SK-N-SH (cell line): ENCODE measurements at regions of chr6 and their contacts with region 1.

Region 1: GRCh38 chr6:157756708-157757429 is 66.2 kb upstream of the SNX9 start:
- DNase-seq: peak; percentile 79
- H3K4me3 ChIP-seq: peak overlapping the region in 1 of 2 experiments; percentile 29; a peak in 1 of 4 replicates
- H3K27ac ChIP-seq: peak overlapping the region in 1 of 2 experiments; percentile 45; a peak in 1 of 4 replicates
- H3K4me1 ChIP-seq: peaks cover 15 to 18% of the 10 kb centered on the region in 2 experiments; a peak in 3 of 4 replicates
- H3K27me3 ChIP-seq: no peaks in the 10 kb centered on the region
- CTCF ChIP-seq: peak; percentile 76
- EP300 ChIP-seq: no peak
- RAD21 ChIP-seq: peak; percentile 84

Region 2: DNA sequence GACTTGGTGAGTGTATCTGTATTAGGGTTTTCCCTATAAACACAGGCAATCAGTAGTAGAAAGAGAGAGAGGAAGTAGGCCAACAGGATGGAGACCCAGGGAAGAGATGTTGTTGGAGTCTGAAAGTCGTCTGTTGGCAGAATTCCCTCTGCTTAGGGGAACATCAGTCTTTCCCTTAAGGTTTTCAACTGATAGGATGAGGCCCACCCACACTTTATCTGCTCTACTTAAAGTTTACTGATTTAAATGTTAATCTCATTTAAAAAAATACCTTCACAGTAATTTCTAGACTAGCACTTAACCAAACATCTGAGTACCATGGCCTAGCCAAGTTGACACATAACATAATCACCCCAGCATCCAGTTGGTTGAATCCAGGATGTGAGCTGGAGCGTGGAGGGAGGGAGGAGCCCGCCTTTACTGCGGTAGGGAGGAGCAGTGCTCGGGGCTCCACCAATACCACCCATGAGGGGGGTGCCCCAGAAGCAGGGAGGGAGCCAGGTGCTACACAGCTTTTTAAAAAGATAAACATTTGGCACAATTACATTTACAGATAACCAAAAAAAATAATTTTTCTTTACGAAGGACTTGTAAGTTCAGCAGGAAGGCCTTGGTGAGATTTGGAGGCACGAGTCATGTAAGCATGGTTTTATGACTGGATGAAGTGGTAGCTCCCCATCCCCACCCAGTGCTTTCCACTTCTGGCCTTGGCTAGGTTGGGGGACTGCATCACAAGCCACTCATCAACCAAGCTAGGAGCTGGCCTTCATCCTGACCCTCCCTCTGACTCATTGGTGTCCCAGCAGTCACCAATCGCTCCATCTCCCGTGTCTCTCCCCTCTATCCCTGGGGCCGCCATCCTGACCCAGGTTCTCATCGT is 47.8 kb after region 1 on chr6:
- CTCF ChIA-PET with region 1: interaction called, 13 read pairs
- POLR2A ChIA-PET with region 1: no interaction called
- DNase-seq: no peak
- H3K4me3 ChIP-seq: no peak overlapping the region
- H3K27ac ChIP-seq: no peak overlapping the region
- H3K4me1 ChIP-seq: no peaks in the 10 kb centered on the region
- H3K27me3 ChIP-seq: no peaks in the 10 kb centered on the region
- CTCF ChIP-seq: no peak
- EP300 ChIP-seq: no peak
- RAD21 ChIP-seq: no peak

Region 3: GRCh38 chr6:157885211-157885788 is 128.4 kb after region 1 on chr6:
- CTCF ChIA-PET with region 1: interaction called, 11 read pairs
- POLR2A ChIA-PET with region 1: no interaction called
- DNase-seq: no peak
- H3K4me3 ChIP-seq: no peak overlapping the region
- H3K27ac ChIP-seq: no peak overlapping the region
- H3K4me1 ChIP-seq: no peaks in the 10 kb centered on the region
- H3K27me3 ChIP-seq: no peaks in the 10 kb centered on the region
- CTCF ChIP-seq: no peak
- EP300 ChIP-seq: no peak
- RAD21 ChIP-seq: no peak

Region 4: GRCh38 chr6:158060455-158061360 is 303.8 kb after region 1 on chr6:
- CTCF ChIA-PET with region 1: interaction called, 14 read pairs
- POLR2A ChIA-PET with region 1: no interaction called
- DNase-seq: peak; percentile 60
- H3K4me3 ChIP-seq: no peak overlapping the region
- H3K27ac ChIP-seq: peak overlapping the region; percentile 51 to 99
- H3K4me1 ChIP-seq: peaks cover 14 to 39% of the 10 kb centered on the region in 2 experiments; a peak in 3 of 4 replicates
- H3K27me3 ChIP-seq: no peaks in the 10 kb centered on the region
- CTCF ChIP-seq: no peak
- EP300 ChIP-seq: peak in 1 of 2 experiments; percentile 70; a peak in 1 of 4 replicates
- RAD21 ChIP-seq: no peak

Region 5: DNA sequence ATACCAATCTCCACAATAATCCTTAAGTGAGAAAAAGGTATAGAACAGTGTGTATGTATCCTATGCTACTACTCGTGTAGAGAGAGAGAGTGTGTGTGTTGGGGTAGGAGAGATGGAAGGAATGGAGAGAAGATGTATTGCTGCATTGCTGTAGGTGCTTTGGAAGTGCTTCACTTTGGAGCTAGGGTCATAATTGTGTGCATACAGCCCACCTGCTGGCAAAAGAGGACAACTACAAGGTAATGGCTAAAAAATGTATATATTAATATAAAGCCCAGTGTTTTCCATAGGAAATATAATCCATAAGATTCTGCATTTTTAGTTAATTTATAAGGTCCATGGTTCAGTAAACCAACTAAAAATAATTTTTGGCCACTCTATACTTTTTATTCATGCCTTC is 375.1 kb after region 1 on chr6:
- CTCF ChIA-PET with region 1: interaction called, 26 read pairs
- POLR2A ChIA-PET with region 1: no interaction called
- DNase-seq: peak; percentile 62
- H3K4me3 ChIP-seq: no peak overlapping the region
- H3K27ac ChIP-seq: no peak overlapping the region
- H3K4me1 ChIP-seq: no peaks in the 10 kb centered on the region
- H3K27me3 ChIP-seq: no peaks in the 10 kb centered on the region
- CTCF ChIP-seq: peak; percentile 67
- EP300 ChIP-seq: no peak
- RAD21 ChIP-seq: peak; percentile 85